B cell (primary cell): ENCODE measurements at regions of chr7 and their contacts with region 1.

Region 1: GRCh38 chr7:21898265-21898930 is 47.3 kb downstream of the CDCA7L start:
- DNase-seq: peak; percentile 78
- ATAC-seq: peak; percentile 90
- H3K4me3 ChIP-seq: peak overlapping the region; percentile 12 to 55 (median 31)
- H3K4me3 Mint-ChIP-seq: peak overlapping the region; percentile 90
- H3K27ac ChIP-seq: peak overlapping the region; percentile 78 to 96
- H3K27ac Mint-ChIP-seq: peak overlapping the region; percentile 97
- H3K4me1 ChIP-seq: peaks cover 24 to 25% of the 10 kb centered on the region in 2 donors
- H3K4me1 Mint-ChIP-seq: peaks cover 33% of the 10 kb centered on the region
- H3K27me3 ChIP-seq: no peaks in the 10 kb centered on the region
- H3K27me3 Mint-ChIP-seq: no peaks in the 10 kb centered on the region
- CTCF ChIP-seq: no peak

Region 2: GRCh38 chr7:21939136-21939857 is 40.9 kb after region 1 on chr7:
- CTCF ChIA-PET with region 1: no interaction called
- POLR2A ChIA-PET with region 1: interaction called, 7 read pairs
- intact Hi-C with region 1: loop called (anchors 1 kb)
- DNase-seq: peak; percentile 68
- ATAC-seq: peak; percentile 42
- H3K4me3 ChIP-seq: peak overlapping the region in 1 of 5 experiments; percentile 6
- H3K4me3 Mint-ChIP-seq: peak overlapping the region; percentile 46
- H3K27ac ChIP-seq: peak overlapping the region; percentile 60 to 86
- H3K27ac Mint-ChIP-seq: peak overlapping the region; percentile 62
- H3K4me1 ChIP-seq: peaks cover 69 to 96% of the 10 kb centered on the region in 2 donors
- H3K4me1 Mint-ChIP-seq: peaks cover 86% of the 10 kb centered on the region
- H3K27me3 ChIP-seq: no peaks in the 10 kb centered on the region
- H3K27me3 Mint-ChIP-seq: no peaks in the 10 kb centered on the region
- CTCF ChIP-seq: no peak

Region 3: GRCh38 chr7:21953781-21954180 is 55.4 kb after region 1 on chr7:
- CTCF ChIA-PET with region 1: no interaction called
- POLR2A ChIA-PET with region 1: no interaction called
- intact Hi-C with region 1: no loop called
- DNase-seq: no peak
- ATAC-seq: no peak
- H3K4me3 ChIP-seq: no peak overlapping the region
- H3K4me3 Mint-ChIP-seq: no peak overlapping the region
- H3K27ac ChIP-seq: no peak overlapping the region
- H3K27ac Mint-ChIP-seq: no peak overlapping the region
- H3K4me1 ChIP-seq: no peaks in the 10 kb centered on the region
- H3K4me1 Mint-ChIP-seq: peaks cover 8% of the 10 kb centered on the region
- H3K27me3 ChIP-seq: no peaks in the 10 kb centered on the region
- H3K27me3 Mint-ChIP-seq: no peaks in the 10 kb centered on the region
- CTCF ChIP-seq: no peak

Region 4: DNA sequence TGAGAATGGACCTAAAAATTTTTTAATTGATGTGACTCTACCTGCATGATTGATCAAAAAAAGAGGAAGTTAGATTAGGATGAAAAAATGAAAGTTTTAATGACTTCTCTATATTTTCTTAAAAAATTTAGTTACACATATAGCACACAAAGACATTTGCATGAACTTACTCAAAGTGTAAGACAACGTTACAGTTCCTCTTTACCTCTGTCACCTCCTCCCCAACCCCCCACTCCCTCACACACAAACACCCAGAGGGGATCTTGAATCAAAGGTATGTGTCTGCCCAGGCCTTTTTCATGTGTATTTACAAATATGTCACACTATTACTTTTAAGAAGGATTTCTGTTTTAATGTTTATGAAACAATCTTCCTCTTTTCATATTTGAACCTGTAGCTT is 67.9 kb after region 1 on chr7:
- CTCF ChIA-PET with region 1: no interaction called
- POLR2A ChIA-PET with region 1: no interaction called
- intact Hi-C with region 1: loop called (anchors 2 kb)
- DNase-seq: peak; percentile 85
- ATAC-seq: peak; percentile 96
- H3K4me3 ChIP-seq: peak overlapping the region in 1 of 5 experiments; percentile 38
- H3K4me3 Mint-ChIP-seq: peak overlapping the region; percentile 79
- H3K27ac ChIP-seq: peak overlapping the region; percentile 80 to 85
- H3K27ac Mint-ChIP-seq: peak overlapping the region; percentile 93
- H3K4me1 ChIP-seq: peaks cover 52 to 55% of the 10 kb centered on the region in 2 donors
- H3K4me1 Mint-ChIP-seq: peaks cover 58% of the 10 kb centered on the region
- H3K27me3 ChIP-seq: no peaks in the 10 kb centered on the region
- H3K27me3 Mint-ChIP-seq: no peaks in the 10 kb centered on the region
- CTCF ChIP-seq: no peak